ENCODE measurements at regions of chr12 and their contacts with region 1.

Region 1: GRCh38 chr12:55659486-55660385 is 23.0 kb downstream of the OR10P1 start:
- DNase-seq: no peak
- ATAC-seq: peak; percentile 65; the same call in 1 of the 2 replicates
- H3K4me3 ChIP-seq: no peak overlapping the region
- H3K27ac ChIP-seq: no peak overlapping the region
- H3K4me1 ChIP-seq: no peaks in the 10 kb centered on the region
- H3K27me3 ChIP-seq: no peaks in the 10 kb centered on the region
- CTCF ChIP-seq: peak; percentile 62 to 74 (median 64); a peak in 5 of 6 replicates
- POLR2A ChIP-seq: no peak
- RAD21 ChIP-seq: peak; percentile 84

Region 2: GRCh38 chr12:55642669-55643068 is 17.1 kb before region 1 on chr12:
- CTCF ChIA-PET with region 1: interaction called, 30 read pairs
- POLR2A ChIA-PET with region 1: no interaction called
- RAD21 ChIA-PET with region 1: interaction called, 3 to 4 read pairs
- intact Hi-C with region 1: loop called (anchors 1 kb)
- DNase-seq: no peak
- ATAC-seq: no peak
- H3K4me3 ChIP-seq: no peak overlapping the region
- H3K27ac ChIP-seq: no peak overlapping the region
- H3K4me1 ChIP-seq: peaks cover 0 to 17% of the 10 kb centered on the region in 2 experiments; a peak in 2 of 4 replicates
- H3K27me3 ChIP-seq: peaks cover 13% of the 10 kb centered on the region; the same call in 1 of the 2 replicates
- CTCF ChIP-seq: no peak
- POLR2A ChIP-seq: no peak
- RAD21 ChIP-seq: no peak

Region 3: DNA sequence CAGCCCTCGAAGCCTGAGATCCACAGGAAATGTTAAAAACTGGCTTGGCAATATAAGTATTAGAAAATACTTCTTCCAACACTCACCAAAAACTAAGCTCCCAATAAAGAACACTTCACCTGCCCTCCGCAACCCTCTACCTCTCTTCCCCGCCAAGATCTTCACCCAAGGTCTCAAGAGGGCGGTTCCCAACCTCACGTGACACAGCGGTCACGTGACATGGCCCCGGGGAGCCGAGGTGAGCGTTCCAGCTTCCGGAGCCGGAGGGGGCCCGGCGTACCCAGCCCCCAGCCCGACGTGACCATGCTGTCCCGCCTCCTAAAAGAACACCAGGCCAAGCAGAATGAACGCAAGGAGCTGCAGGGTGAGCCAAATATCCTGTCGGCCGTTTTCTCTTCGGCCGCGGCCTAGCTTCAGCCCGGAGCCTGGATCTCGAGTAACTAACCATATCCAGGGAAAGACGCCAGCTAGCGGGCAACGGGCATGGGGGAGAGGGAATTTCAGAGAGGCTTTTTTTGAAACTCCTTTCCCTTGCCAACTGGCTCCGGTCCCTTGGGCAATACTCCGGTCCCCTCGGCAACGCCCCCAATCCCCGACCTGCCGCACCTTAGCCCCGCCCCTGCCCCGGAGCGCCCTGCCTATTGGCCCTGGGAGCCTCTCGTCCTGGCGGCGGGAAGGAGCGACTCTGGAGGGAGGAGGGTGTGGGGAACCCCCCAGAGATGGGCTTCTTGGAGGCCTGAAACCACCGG is 56.3 kb after region 1 on chr12 and contains the start of gene BLOC1S1:
- CTCF ChIA-PET with region 1: interaction called, 4 read pairs
- POLR2A ChIA-PET with region 1: no interaction called
- RAD21 ChIA-PET with region 1: interaction called in 1 of 2 experiments, 3 read pairs
- intact Hi-C with region 1: loop called (anchors 1 kb)
- DNase-seq: peak; percentile 94
- ATAC-seq: peak; percentile 90
- H3K4me3 ChIP-seq: peak within 1 kb of the TSS; percentile 75 to 94
- H3K27ac ChIP-seq: peak within 1 kb of the TSS; percentile 84
- H3K4me1 ChIP-seq: peaks cover 27 to 48% of the 10 kb centered on the region in 2 experiments
- H3K27me3 ChIP-seq: peaks cover 11% of the 10 kb centered on the region; the same call in 1 of the 2 replicates
- CTCF ChIP-seq: no peak
- POLR2A ChIP-seq: peak; percentile 49
- RAD21 ChIP-seq: no peak
- total RNA-seq, gene BLOC1S1: 85.5 TPM

Region 4: DNA sequence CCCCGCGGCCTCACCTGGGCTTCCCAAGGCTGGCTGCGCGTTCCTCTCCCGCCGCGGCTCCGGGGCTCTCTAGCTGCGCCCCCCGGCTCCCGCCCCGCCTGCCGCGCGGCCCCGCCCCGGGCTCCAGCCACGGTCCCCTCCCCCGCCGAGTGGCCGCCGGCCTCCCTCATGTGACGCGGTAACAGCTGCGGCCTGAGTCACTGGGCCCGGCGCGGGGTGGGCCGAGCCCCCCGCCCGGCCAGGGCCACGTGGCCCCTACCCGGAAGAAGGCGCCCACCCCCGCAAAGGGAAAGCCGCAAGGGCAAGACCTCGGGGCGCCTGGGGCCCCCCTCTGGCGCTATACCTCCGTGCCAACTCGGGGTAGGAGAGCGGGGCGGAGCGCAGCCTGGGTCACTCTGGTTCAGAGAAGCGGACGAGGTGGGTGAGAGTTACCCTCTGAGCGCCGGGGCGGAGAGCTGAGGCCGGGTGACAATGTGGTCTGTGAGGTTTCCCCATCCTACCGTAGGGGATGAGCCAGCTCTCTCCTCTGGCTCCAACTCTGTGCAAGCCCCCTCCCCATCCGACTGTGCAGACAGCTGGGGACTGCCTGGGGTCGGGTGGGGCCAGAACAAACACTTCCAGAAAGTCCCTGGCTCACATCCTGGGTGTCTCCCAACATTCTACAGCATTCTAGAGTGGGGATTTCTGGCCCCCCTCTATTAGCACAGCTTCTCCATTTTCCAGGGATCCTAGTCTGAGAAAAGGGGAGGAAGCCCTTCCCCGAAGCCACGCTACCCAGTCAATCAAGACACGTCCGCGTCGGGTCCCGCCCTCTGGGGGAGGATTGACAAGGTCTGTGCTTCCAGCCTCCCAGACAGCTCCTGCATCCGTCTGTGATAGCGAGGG is 69.4 kb after region 1 on chr12 and contains the start of gene CD63:
- CTCF ChIA-PET with region 1: interaction called, 13 read pairs
- POLR2A ChIA-PET with region 1: no interaction called
- RAD21 ChIA-PET with region 1: no interaction called
- intact Hi-C with region 1: no loop called
- DNase-seq: peak; percentile 68
- ATAC-seq: peak; percentile 83
- H3K4me3 ChIP-seq: peak within 1 kb of the TSS; percentile 88 to 96
- H3K27ac ChIP-seq: peak within 1 kb of the TSS; percentile 94
- H3K4me1 ChIP-seq: peaks cover 19 to 55% of the 10 kb centered on the region in 2 experiments
- H3K27me3 ChIP-seq: no peaks in the 10 kb centered on the region
- CTCF ChIP-seq: no peak
- POLR2A ChIP-seq: no peak
- RAD21 ChIP-seq: no peak
- total RNA-seq, gene CD63: 355 TPM

Region 5: GRCh38 chr12:55797068-55797467 is 137.3 kb after region 1 on chr12:
- CTCF ChIA-PET with region 1: no interaction called
- POLR2A ChIA-PET with region 1: no interaction called
- RAD21 ChIA-PET with region 1: no interaction called
- intact Hi-C with region 1: loop called (anchors 10 kb)
- DNase-seq: peak; percentile 26
- ATAC-seq: peak; percentile 76
- H3K4me3 ChIP-seq: no peak overlapping the region
- H3K27ac ChIP-seq: no peak overlapping the region
- H3K4me1 ChIP-seq: no peaks in the 10 kb centered on the region
- H3K27me3 ChIP-seq: no peaks in the 10 kb centered on the region
- CTCF ChIP-seq: peak; percentile 44 to 62 (median 51); a peak in 5 of 6 replicates
- POLR2A ChIP-seq: no peak
- RAD21 ChIP-seq: peak; percentile 60

Region 6: DNA sequence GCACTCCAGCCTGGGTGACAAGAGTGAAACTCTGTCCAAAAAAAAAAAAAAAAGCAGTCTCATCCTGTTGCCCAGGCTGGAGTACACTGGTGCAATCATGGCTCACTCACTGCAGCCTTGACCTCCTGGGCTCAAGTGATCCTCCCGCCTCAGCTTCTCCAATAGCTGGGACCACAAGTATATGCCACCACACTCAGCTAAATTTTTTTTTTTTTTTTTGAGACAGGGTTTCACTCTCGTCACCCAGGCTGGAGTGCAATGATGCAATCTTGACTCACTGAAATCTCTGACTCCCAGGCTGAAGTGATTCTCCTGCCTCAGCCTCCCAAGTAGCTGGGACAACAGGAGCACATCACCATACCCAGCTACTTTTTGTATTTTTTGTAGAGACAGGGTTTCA is 661.3 kb after region 1 on chr12:
- CTCF ChIA-PET with region 1: no interaction called
- POLR2A ChIA-PET with region 1: no interaction called
- RAD21 ChIA-PET with region 1: no interaction called
- intact Hi-C with region 1: no loop called
- DNase-seq: no peak
- ATAC-seq: no peak
- H3K4me3 ChIP-seq: no peak overlapping the region
- H3K27ac ChIP-seq: no peak overlapping the region
- H3K4me1 ChIP-seq: peaks cover 4 to 8% of the 10 kb centered on the region in 2 experiments; a peak in 3 of 4 replicates
- H3K27me3 ChIP-seq: no peaks in the 10 kb centered on the region
- CTCF ChIP-seq: no peak
- POLR2A ChIP-seq: no peak
- RAD21 ChIP-seq: no peak

Measured in HCT116 (cell line).